GM10248 (cell line): ENCODE measurements at regions of chr3 and their contacts with region 1.

Region 1: GRCh38 chr3:185424435-185424834 is 61.5 kb downstream of the MAP3K13 start:
- DNase-seq: no peak
- CTCF ChIP-seq: no peak

Region 2: GRCh38 chr3:185363662-185364550 is 60.5 kb before region 1 on chr3:
- CTCF ChIA-PET with region 1: no interaction called
- POLR2A ChIA-PET with region 1: no interaction called
- DNase-seq: no peak
- CTCF ChIP-seq: no peak

Region 3: DNA sequence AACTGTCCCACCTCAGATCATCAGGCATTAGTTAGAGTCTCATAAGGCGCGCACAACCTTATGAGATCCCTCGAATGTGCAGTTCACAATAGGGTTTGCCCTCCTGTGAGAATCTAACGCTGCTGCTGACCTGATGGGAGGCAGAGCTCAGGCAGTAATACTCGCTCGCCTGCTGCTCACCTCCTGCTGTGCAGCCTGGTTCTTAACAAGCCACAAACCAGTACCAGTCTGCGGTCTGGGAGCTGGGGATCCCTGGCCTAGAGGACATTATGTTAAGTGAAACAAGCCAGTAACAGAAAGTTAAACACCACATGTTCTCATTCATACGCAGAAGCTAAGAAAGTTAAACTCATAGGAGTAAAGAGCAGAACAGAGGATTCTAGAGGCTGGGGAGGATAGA is 14.5 kb before region 1 on chr3:
- CTCF ChIA-PET with region 1: interaction called, 10 read pairs
- POLR2A ChIA-PET with region 1: no interaction called
- DNase-seq: no peak
- CTCF ChIP-seq: no peak

Region 4: DNA sequence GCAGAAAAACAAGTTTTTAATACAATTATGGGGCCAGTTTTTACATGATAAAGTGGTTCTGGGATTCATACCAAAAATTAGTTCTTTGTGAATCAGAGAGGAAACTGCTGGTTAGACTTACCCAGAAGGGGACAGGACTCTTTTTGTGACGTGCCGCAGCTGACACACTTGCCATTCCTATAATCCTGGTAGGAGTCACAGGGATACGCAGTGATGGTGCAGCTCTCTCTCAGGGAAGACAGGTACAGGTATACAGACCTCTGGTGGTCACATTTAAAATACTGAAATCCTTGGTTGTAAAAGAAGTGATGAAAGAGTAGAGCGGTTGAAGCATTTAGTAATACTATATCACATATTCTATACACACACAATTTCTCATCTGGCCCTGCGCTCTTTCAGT is 94.6 kb after region 1 on chr3:
- CTCF ChIA-PET with region 1: no interaction called
- POLR2A ChIA-PET with region 1: no interaction called
- DNase-seq: no peak
- CTCF ChIP-seq: no peak

Region 5: DNA sequence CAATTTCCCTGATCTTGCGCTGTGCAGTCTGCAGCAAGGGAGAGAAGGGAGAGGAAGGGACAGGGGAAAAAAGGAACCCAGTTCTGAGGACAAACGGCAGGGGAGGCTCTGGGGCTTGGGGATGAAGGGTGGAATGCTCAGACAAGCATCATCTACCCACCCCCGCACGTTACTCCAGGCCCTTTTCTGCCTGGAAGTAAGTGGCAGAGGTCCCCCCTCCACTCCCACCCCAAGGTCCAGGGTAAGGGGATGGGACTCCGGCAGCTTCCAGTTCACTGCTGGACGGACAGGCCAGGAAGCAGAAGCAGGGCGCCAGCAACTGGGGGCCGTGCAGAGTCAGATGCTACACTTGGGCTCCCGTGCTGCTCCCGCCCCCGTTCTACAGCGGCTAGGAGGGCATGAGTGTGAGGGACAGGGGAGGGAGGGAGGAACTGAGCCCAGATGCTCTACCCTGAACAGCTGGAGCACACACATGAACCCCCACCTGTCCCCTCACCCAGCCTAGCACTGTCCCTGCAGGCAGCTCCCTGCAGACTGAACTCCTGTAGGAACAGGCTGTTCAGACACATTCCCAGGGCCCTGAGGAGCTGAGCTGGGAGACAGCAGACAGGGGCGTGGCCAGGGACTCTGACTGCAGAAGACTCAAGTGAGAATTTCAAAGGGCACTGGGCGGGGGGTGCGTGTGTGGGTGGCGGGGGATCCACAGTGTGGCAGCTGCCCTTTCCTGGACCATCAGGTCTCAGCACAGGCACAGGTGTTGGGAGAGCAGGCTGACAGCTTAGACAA is 221.4 kb after region 1 on chr3:
- CTCF ChIA-PET with region 1: no interaction called
- POLR2A ChIA-PET with region 1: no interaction called
- DNase-seq: no peak
- CTCF ChIP-seq: no peak